ENCODE measurements at regions of chr9 and their contacts with region 1.

Region 1: DNA sequence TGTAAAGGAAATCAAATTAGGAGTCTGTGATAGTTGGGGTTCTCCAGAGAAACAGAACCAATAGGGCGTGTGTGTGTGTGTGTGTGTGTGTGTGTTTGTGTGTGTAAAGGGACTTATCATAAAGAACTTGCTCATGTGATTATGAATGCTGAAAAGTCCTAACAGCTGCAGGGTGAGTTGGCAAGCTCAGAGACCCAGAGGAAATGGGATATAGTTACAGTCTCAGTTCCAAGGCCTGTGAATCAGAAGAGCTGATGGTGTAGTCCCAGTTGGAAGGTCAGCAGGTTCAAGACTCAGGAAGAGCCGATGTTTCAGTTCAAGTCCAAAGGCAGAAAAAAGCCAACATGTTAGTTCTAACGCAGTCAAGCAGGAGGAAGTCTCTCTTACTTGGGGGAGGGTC is 214.2 kb downstream of the ELAVL2 start:
- DNase-seq: no peak
- H3K4me3 ChIP-seq: no peak overlapping the region
- H3K27ac ChIP-seq: no peak overlapping the region
- H3K4me1 ChIP-seq: no peaks in the 10 kb centered on the region
- H3K27me3 ChIP-seq: no peaks in the 10 kb centered on the region
- CTCF ChIP-seq: no peak
- POLR2A ChIP-seq: no peak

Region 2: DNA sequence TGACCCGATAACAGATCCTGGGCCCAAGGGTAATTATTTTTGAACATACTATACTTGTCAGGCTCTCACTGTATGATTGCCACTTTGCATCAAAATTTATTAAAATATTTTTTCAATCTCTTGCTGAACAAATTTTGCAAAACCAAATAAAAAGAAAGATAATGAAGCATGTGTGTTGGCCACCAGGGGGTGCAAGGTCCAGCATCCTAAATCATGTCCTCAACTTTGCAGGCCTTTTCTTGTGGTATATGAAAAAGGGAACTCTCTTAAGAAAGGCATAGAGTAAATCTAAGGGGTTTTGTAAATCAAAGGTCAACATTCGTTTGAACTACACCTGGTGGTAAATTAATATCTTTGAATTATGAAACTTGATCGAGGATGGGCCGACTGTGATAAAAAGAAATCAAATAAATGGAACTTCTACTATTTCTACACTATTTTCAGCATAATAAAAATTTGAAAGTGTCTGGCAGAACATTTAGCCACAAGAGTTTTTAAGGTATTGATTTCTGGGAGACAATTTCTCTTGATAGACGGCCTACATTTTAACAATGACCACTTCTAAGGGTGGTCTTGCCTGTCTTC is 488.7 kb before region 1 on chr9:
- intact Hi-C with region 1: loop called (anchors 10 kb)
- DNase-seq: no peak
- H3K4me3 ChIP-seq: no peak overlapping the region
- H3K27ac ChIP-seq: no peak overlapping the region
- H3K4me1 ChIP-seq: no peaks in the 10 kb centered on the region
- H3K27me3 ChIP-seq: no peaks in the 10 kb centered on the region
- CTCF ChIP-seq: no peak
- POLR2A ChIP-seq: no peak